ENCODE measurements at regions of chr21 and their contacts with region 1.

Region 1: DNA sequence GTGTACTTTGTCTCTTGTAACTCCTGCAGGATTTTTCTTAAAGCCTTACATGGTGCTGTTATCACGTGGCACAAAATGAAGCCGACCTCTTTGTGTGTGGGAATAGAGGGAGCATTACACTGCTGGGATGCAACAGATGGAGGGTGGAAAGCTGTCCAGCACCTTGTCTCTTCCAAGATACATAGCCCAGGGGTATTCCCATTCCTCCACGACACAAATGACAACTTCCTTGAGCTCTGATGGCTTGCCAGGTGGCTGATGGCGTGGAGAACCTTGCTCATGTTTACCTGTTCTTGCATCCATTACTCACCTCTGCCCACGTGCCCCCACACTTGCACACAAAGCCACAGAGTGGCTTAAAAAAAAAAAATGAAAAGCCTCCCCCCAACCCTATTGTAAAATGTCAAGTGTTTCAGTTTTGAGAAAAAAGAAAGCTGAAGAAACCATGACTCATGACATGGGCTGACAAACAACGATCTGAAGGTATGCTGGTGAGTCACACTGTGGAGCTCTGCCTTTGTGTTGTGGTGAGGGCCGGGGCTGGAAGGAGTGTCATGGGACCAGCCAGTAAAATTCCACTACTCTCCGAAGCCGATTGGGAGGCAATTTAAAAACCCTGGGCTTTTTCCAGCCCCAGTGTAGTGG is 32.0 kb upstream of the ATP5PO start:
- DNase-seq: peak; percentile 87
- H3K4me3 Mint-ChIP-seq: peak overlapping the region; percentile 68
- H3K27ac Mint-ChIP-seq: peak overlapping the region; percentile 99
- H3K4me1 Mint-ChIP-seq: peaks cover 77% of the 10 kb centered on the region
- H3K27me3 Mint-ChIP-seq: no peaks in the 10 kb centered on the region

Region 2: DNA sequence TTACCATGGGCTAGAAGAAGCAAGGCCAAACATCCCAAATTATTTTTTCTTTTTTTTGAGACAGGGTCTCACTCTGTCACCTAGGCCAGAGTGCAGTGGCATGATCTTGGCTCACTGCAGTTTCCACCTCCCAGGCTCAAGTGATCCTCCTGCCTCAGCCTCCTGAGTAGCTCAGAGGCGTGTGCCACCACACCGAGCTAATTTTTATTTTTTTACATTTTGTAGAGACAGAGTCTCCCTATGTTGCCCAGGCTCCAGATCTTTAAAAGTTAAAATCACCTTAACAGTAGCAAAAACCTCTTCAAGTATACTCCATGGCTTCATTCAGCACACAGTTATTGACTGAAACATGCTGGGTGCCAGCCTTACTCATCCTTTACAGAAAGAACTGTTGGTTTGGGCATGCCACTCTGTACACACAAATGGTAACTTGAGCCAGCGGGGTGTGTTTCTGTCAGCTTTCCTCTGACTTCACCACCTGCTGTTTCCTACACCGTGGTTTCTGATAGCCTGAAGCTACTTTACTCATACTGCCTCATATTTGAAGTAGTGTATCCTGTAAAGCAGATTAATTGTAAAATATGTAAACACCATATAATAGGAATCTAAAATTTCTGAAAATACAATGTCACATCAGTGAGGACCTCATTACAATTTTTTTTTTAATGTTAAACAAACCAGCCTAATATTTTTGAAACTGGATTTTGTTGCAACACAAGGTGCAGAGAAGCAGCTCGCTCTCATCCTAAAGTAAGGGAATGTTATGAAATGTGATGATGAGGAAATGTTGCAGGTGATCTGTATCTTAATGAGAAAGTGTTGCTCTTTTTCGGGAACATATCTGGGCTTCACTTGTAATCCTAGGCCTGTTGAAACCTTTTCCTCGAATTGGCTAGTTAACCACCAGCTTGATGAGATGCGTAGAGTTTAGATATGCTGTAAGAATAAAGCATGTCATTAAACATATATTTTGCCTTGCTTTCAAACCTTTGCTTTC is 145.9 kb before region 1 on chr21:
- CTCF ChIA-PET with region 1: no interaction called
- POLR2A ChIA-PET with region 1: no interaction called
- DNase-seq: no peak
- H3K4me3 Mint-ChIP-seq: no peak overlapping the region
- H3K27ac Mint-ChIP-seq: no peak overlapping the region
- H3K4me1 Mint-ChIP-seq: no peaks in the 10 kb centered on the region
- H3K27me3 Mint-ChIP-seq: no peaks in the 10 kb centered on the region

Region 3: GRCh38 chr21:33844104-33844889 is 103.3 kb before region 1 on chr21:
- CTCF ChIA-PET with region 1: no interaction called
- POLR2A ChIA-PET with region 1: no interaction called
- DNase-seq: no peak
- H3K4me3 Mint-ChIP-seq: no peak overlapping the region
- H3K27ac Mint-ChIP-seq: no peak overlapping the region
- H3K4me1 Mint-ChIP-seq: no peaks in the 10 kb centered on the region
- H3K27me3 Mint-ChIP-seq: no peaks in the 10 kb centered on the region

Region 4: DNA sequence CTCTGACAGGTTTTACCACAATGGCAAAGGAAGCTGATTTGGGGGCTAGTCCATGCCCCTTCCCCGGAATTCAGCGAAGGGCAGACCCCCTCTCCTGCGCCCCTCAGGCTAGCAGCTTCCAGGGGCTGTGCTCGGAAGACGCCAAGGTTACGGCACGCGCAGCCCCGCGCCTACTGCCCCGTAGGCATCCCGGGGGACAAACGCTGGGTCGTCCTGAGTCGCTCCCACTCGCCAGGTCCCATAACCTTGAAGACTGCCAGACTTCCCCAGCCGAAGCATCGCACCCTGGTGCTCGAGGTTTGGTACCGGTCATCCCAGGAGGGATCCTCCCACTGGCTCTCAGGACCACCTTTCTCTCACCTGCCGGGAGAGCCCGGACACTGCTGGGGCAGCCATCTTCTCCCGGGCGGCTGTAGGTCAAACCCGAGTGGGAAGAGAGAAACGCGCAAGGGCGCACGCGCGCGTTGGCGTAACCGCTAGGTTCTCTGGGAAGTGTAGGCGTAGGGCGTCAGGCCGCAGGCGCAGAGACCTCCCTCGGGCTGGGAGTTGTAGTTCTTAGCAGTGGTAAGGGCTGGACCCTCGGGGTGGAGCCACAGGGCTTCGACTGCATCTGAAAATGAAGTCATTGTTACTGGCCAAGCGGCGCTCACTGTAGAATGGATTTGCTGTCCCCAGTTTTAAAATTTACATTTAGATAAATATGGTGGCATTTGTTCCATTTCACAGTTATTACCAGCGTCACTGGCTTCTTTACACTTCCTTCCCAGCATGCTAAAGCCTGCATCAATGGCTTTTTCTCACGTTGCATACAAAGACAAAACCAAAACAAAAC is 32.0 kb before region 1 on chr21 and contains the start of gene ATP5PO:
- CTCF ChIA-PET with region 1: no interaction called
- POLR2A ChIA-PET with region 1: interaction called, 17 read pairs
- DNase-seq: peak; percentile 98
- H3K4me3 Mint-ChIP-seq: peak within 1 kb of the TSS; percentile 94
- H3K27ac Mint-ChIP-seq: peak within 1 kb of the TSS; percentile 87
- H3K4me1 Mint-ChIP-seq: peaks cover 35% of the 10 kb centered on the region
- H3K27me3 Mint-ChIP-seq: no peaks in the 10 kb centered on the region
- total RNA-seq, gene ATP5PO: 193 to 196 TPM

Region 5: GRCh38 chr21:33961061-33961460 is 13.5 kb after region 1 on chr21:
- CTCF ChIA-PET with region 1: interaction called, 6 read pairs
- POLR2A ChIA-PET with region 1: interaction called, 270 read pairs
- DNase-seq: no peak
- H3K4me3 Mint-ChIP-seq: no peak overlapping the region
- H3K27ac Mint-ChIP-seq: no peak overlapping the region
- H3K4me1 Mint-ChIP-seq: peaks cover 8% of the 10 kb centered on the region
- H3K27me3 Mint-ChIP-seq: no peaks in the 10 kb centered on the region

Region 6: GRCh38 chr21:33998402-33998801 is 50.8 kb after region 1 on chr21:
- CTCF ChIA-PET with region 1: no interaction called
- POLR2A ChIA-PET with region 1: interaction called, 18 read pairs
- DNase-seq: no peak
- H3K4me3 Mint-ChIP-seq: no peak overlapping the region
- H3K27ac Mint-ChIP-seq: peak overlapping the region; percentile 40
- H3K4me1 Mint-ChIP-seq: peaks cover 25% of the 10 kb centered on the region
- H3K27me3 Mint-ChIP-seq: no peaks in the 10 kb centered on the region

Region 7: GRCh38 chr21:34073032-34073869 is 125.7 kb after region 1 on chr21 and contains the starts of genes MRPS6 and SLC5A3:
- CTCF ChIA-PET with region 1: interaction called, 8 read pairs
- POLR2A ChIA-PET with region 1: interaction called, 111 read pairs
- DNase-seq: peak; percentile 76
- H3K4me3 Mint-ChIP-seq: peak within 1 kb of the TSS; percentile 85
- H3K27ac Mint-ChIP-seq: peak within 1 kb of the TSS; percentile 71
- H3K4me1 Mint-ChIP-seq: peaks cover 45% of the 10 kb centered on the region
- H3K27me3 Mint-ChIP-seq: no peaks in the 10 kb centered on the region
- total RNA-seq, gene MRPS6: 75.2 to 79.2 TPM
- total RNA-seq, gene SLC5A3: 23.3 to 26.0 TPM